AG04450 (cell line): ENCODE measurements at regions of chr9 and their contacts with region 1.

Region 1: DNA sequence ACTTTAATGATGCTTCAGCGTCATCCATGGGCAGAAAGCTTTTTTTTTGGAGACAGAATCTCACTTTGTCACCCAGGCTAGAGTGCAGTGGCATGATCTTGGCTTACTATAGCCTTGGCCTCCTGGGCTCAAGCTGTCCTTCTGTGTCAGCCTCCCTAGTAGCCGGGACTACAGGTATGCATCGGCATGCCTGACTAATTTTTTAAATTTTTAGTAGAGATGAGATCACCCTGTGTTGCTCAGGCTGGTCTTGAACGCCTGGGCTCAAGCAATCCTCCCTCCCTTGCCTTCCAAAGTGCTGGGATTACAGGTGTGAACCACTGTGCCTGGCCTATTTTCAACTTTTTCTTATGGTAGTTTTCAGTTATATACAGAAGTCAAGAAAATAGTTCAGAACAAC is 23.2 kb downstream of the SPIN1 start:
- DNase-seq: no peak
- H3K4me3 ChIP-seq: no peak overlapping the region
- H3K27ac ChIP-seq: no peak overlapping the region
- H3K27me3 ChIP-seq: no peaks in the 10 kb centered on the region
- CTCF ChIP-seq: no peak

Region 2: GRCh38 chr9:87630266-87630665 is 781.2 kb before region 1 on chr9:
- CTCF ChIA-PET with region 1: no interaction called
- POLR2A ChIA-PET with region 1: no interaction called
- DNase-seq: no peak
- H3K4me3 ChIP-seq: no peak overlapping the region
- H3K27ac ChIP-seq: no peak overlapping the region
- H3K27me3 ChIP-seq: no peaks in the 10 kb centered on the region
- CTCF ChIP-seq: no peak

Region 3: DNA sequence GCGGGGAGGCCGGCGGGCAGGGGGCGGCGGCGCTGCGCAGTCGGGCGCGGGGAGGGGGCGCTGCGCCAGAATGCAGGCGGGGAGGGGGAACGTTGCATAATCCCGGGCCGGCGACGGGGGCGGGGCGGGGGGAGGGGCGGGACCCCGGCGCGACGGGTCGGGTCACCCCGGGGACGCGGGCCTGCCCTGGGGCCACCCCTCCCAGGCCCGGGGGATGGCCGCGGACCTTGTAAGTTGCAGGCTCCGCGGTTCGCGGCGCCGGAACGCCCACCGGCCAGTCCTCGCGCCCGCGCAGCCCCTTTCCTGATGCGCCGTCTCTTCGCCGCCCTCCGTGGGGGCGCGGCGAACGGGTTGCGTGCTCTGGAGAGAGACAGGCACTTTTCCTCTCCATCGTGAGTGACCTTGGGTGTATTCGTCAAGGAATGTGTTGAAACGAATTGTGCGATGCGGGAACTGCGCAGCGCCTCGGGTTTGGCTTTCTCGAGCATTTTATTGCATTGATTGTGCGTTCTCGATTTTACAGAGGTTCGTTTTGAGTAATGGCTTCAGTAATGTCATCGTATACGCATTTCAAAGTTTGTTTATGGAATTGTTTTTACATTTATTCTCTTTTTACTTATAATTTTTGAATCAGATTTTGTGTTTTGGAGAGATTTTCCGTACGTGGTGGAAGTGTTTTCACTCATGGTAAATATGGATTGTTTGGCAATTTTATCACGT is 22.4 kb before region 1 on chr9:
- CTCF ChIA-PET with region 1: interaction called, 11 read pairs
- POLR2A ChIA-PET with region 1: no interaction called
- DNase-seq: no peak
- H3K4me3 ChIP-seq: peak overlapping the region; percentile 76
- H3K27ac ChIP-seq: peak overlapping the region; percentile 68
- H3K27me3 ChIP-seq: no peaks in the 10 kb centered on the region
- CTCF ChIP-seq: no peak

Region 4: GRCh38 chr9:88460587-88461332 is 49.3 kb after region 1 on chr9:
- CTCF ChIA-PET with region 1: no interaction called
- POLR2A ChIA-PET with region 1: no interaction called
- DNase-seq: no peak
- H3K4me3 ChIP-seq: no peak overlapping the region
- H3K27ac ChIP-seq: no peak overlapping the region
- H3K27me3 ChIP-seq: no peaks in the 10 kb centered on the region
- CTCF ChIP-seq: no peak